Stomach (tissue), 19 donors: ENCODE measurements at regions of chr5 and their contacts with region 1.

Region 1: DNA sequence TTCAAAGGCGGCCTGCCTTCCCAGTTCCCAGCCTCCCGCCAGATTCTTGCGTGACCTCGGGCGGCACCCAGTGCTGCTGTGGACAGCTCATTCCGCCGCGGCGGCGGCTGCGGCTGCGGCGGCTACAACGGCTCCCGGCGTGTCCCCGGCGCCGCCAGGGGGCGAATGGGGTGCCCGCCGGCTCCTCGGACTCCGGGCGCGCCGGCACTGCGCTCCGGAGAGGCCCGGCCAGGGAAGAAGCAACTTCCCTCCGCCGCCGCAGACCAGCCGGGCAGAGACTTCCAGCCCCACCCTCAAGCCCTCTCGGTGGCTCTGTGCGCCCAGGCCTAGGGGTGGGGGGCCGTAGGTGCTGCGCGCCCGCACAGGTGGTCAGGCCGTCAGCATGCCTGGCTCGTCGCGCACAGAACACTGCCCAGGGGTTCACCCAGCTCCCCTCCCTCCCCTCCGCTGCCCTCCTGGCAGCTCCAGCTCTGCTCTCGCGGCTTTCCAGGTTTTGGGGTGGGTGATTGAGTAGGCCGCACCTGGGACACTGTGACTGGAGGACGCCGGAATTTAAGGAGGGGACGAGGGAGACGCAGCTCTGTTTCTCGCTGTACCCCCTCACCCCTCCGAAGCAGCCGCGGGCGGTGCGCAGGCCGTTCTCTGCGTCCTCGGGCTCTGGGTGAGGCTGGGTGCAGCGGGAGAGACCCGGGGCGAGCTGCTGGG is 20.2 kb downstream of the IGIP start:
- DNase-seq: peak; percentile 84 to 93
- H3K4me3 ChIP-seq: peak overlapping the region; percentile 36 to 56 (median 48)
- H3K27ac ChIP-seq: peak overlapping the region in 2 of 5 donors; percentile 14 to 59
- H3K4me1 ChIP-seq: peaks cover 25 to 60% (median 43%) of the 10 kb centered on the region in 4 donors
- H3K27me3 ChIP-seq: peaks cover 0 to 8% (median 4%) of the 10 kb centered on the region in 3 donors
- CTCF ChIP-seq: peak in 5 of 7 experiments; percentile 26 to 88 (median 77)
- EP300 ChIP-seq: no peak
- POLR2A ChIP-seq: no peak

Region 2: GRCh38 chr5:140073296-140073695 is 72.7 kb before region 1 on chr5:
- intact Hi-C with region 1: loop called (anchors 5 kb)
- DNase-seq: peak in 1 of 2 donors; percentile 28
- H3K4me3 ChIP-seq: no peak overlapping the region
- H3K27ac ChIP-seq: no peak overlapping the region
- H3K4me1 ChIP-seq: peaks cover 0 to 4% (median 4%) of the 10 kb centered on the region in 4 donors
- H3K27me3 ChIP-seq: no peaks in the 10 kb centered on the region
- CTCF ChIP-seq: peak in 4 of 7 experiments; percentile 31 to 76 (median 64)
- EP300 ChIP-seq: no peak
- POLR2A ChIP-seq: no peak

Region 3: DNA sequence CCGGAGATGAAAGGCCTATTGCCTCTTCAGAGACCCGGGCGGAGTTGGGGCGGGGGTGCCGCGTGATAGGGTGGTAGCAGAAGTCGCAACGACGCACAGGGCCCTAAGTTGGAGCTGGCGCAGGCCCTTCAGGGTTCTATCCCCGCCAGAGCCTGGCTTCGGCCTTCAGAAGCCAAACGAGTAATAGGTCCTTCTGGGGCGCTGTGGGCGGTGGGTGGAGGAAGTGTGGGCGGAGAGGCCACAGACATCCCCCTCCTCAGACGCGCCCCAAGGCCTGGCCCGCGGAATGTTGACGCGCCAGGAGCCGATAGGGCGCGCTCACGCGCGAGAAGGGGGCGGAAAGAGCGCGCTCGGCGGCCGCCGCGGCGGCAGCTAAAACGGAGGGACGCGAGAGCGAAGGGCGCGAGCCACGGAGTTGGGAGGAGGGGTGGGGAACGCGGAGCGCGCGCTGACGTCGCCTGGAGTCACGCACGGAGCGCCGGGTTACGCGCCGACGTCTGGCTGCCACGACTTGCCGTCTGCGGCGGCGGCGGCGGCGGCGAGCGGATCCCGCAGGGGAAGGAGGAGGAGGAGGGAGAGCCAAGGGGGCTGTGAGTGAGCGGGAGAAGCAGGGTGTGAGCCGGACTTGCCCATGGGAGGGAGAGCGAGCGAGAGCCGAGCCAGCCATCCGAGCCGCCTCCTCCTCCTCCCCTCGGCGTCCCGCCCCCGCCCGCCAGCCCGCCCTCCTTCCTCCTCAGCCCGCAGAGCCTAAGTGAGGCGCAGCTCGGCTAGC is 38.5 kb before region 1 on chr5:
- intact Hi-C with region 1: loop called (anchors 5 kb)
- DNase-seq: peak; percentile 94 to 98
- H3K4me3 ChIP-seq: peak overlapping the region; percentile 69 to 77 (median 76)
- H3K27ac ChIP-seq: peak overlapping the region; percentile 91 to 99 (median 98)
- H3K4me1 ChIP-seq: peaks cover 12 to 58% (median 51%) of the 10 kb centered on the region in 4 donors
- H3K27me3 ChIP-seq: peaks cover 0 to 14% (median 0%) of the 10 kb centered on the region in 3 donors
- CTCF ChIP-seq: no peak
- EP300 ChIP-seq: no peak
- POLR2A ChIP-seq: peak in 1 of 4 donors; percentile 18